Caco-2 (cell line): ENCODE measurements at regions of chr16 and their contacts with region 1.

Region 1: DNA sequence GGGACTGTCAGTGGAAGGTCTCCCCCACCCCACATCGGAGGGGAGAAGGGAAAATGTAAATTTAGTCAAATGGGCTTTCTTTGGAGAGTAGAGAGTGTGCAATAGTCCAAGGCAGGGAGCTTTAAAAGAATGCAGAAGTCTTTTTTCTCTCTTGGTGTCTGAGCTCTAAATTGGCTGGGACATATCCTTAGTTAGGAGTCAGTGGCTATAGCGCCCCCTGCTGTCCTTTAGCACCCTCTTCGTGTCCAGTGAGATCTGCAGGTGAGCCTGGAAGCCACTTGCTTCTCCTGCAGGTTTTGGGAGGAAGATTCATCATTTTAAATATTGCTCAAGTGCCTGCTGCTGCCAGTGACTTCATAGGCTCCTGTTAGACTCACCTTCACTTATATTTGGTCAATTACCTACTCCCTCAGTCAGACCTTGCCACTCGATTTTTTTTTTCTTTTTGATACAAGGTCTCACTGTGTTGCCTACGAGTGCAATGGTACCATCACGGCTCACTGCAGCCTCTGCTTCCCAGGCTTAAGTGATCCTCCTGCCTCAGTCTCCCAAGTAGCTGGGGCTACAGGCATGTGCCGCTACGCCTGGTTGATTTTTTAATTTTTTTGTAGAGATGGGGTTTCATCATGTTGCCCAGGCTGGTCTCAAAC is 174.8 kb downstream of the PRKCB start:
- DNase-seq: peak; percentile 55 to 68
- H3K4me3 ChIP-seq: no peak overlapping the region
- H3K4me3 Mint-ChIP-seq: no peak overlapping the region
- H3K27ac Mint-ChIP-seq: no peak overlapping the region
- H3K4me1 ChIP-seq: no peaks in the 10 kb centered on the region
- H3K4me1 Mint-ChIP-seq: no peaks in the 10 kb centered on the region
- H3K27me3 ChIP-seq: no peaks in the 10 kb centered on the region
- H3K27me3 Mint-ChIP-seq: peaks cover 11% of the 10 kb centered on the region
- CTCF ChIP-seq: peak; percentile 57 to 68

Region 2: DNA sequence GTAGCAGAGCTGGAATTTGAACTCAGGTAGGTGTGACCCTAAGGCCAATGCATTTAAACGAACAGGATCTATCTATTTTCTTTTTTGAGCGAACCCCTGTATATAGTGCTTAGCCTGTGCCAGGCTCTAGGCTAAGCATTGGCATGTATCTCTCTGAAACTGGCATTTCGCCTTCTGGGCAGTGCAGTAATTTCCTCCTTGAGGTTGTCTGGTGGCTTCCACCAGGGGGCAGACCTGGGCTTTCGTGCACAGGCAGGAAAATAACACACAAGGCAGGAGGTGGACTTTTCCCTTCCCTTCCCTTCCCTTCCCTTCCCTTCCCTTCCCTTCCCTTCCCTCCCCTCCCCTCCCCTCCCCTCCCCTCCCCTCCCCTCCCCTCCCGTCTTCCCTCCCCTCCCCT is 209.2 kb before region 1 on chr16:
- CTCF ChIA-PET with region 1: interaction called, 4 read pairs
- POLR2A ChIA-PET with region 1: no interaction called
- intact Hi-C with region 1: loop called (anchors 2 kb)
- DNase-seq: peak; percentile 55 to 59
- H3K4me3 ChIP-seq: no peak overlapping the region
- H3K4me3 Mint-ChIP-seq: no peak overlapping the region
- H3K27ac Mint-ChIP-seq: no peak overlapping the region
- H3K4me1 ChIP-seq: no peaks in the 10 kb centered on the region
- H3K4me1 Mint-ChIP-seq: no peaks in the 10 kb centered on the region
- H3K27me3 ChIP-seq: no peaks in the 10 kb centered on the region
- H3K27me3 Mint-ChIP-seq: peaks cover 15% of the 10 kb centered on the region
- CTCF ChIP-seq: peak; percentile 36 to 65